Mammary epithelial cell (primary cell): ENCODE measurements at regions of chr5 and their contacts with region 1.

Region 1: GRCh38 chr5:111158105-111158744 is 66.0 kb upstream of the CAMK4 start:
- DNase-seq: peak; percentile 65
- H3K4me3 ChIP-seq: no peak overlapping the region
- H3K27ac ChIP-seq: no peak overlapping the region
- H3K4me1 ChIP-seq: no peaks in the 10 kb centered on the region
- H3K27me3 ChIP-seq: no peaks in the 10 kb centered on the region
- CTCF ChIP-seq: peak; percentile 100

Region 2: GRCh38 chr5:110738812-110739651 is 419.2 kb before region 1 on chr5 and contains the start of gene SLC25A46:
- CTCF ChIA-PET with region 1: no interaction called
- dilution Hi-C with region 1: no loop called
- in situ Hi-C with region 1: no loop called
- intact Hi-C with region 1: no loop called
- DNase-seq: peak; percentile 86
- H3K4me3 ChIP-seq: peak within 1 kb of the TSS; percentile 90 to 100 (median 99)
- H3K27ac ChIP-seq: peak within 1 kb of the TSS; percentile 71
- H3K4me1 ChIP-seq: no peaks in the 10 kb centered on the region
- H3K27me3 ChIP-seq: no peaks in the 10 kb centered on the region
- CTCF ChIP-seq: no peak
- total RNA-seq, gene SLC25A46: 44.4 to 95.0 TPM

Region 3: GRCh38 chr5:111266491-111266890 is 108.3 kb after region 1 on chr5:
- CTCF ChIA-PET with region 1: interaction called, 3 read pairs
- dilution Hi-C with region 1: no loop called
- in situ Hi-C with region 1: loop called in 1 of 2 experiments (anchors 5 kb)
- intact Hi-C with region 1: no loop called
- DNase-seq: peak; percentile 95
- H3K4me3 ChIP-seq: no peak overlapping the region
- H3K27ac ChIP-seq: no peak overlapping the region
- H3K4me1 ChIP-seq: peaks cover 23% of the 10 kb centered on the region
- H3K27me3 ChIP-seq: no peaks in the 10 kb centered on the region
- CTCF ChIP-seq: no peak

Region 4: DNA sequence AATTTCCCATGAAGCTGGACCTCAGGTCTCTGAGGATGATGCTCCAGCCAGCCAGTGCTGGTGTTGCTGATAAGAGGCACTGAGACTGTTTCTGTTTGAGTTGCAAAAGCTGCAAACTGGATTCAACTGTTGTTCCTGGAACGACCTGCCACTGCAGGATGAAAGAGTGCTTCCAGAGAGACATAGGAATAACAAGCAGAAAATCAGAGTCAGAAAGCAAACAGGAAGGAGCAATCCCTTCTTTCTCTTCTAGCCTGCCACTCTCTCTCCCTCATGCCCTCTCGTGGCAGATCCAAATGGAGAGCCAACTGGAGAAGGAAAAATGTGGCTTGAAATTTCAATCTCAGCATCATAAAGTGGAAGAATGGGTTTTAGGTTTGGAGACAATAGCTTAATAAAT is 243.7 kb after region 1 on chr5:
- CTCF ChIA-PET with region 1: no interaction called
- dilution Hi-C with region 1: no loop called
- in situ Hi-C with region 1: no loop called
- intact Hi-C with region 1: loop called (anchors 2 kb)
- DNase-seq: no peak
- H3K4me3 ChIP-seq: no peak overlapping the region
- H3K27ac ChIP-seq: no peak overlapping the region
- H3K4me1 ChIP-seq: no peaks in the 10 kb centered on the region
- H3K27me3 ChIP-seq: no peaks in the 10 kb centered on the region
- CTCF ChIP-seq: peak in 1 of 2 donors; percentile 28

Region 5: DNA sequence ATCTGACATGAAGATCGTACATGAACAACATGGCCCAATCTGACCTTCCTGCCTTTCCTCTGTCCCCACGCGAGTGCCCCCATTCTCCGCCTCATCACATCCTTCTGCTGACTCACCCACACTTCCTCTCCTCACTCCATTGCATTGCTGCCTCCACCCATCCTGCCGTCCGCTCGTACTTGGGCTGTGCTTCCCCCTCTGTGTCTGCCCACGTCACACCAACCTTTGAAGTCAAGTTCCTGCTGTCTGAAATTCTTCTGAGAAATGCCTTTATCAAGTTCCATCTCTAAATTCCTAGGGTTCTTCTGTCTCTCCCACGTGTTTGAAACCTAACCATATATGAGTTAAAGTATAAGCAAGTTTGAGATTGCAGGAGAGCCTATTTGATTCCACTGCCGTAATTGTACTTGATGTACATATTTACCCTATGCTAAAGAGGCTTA is 372.1 kb after region 1 on chr5:
- CTCF ChIA-PET with region 1: no interaction called
- dilution Hi-C with region 1: no loop called
- in situ Hi-C with region 1: no loop called
- intact Hi-C with region 1: loop called (anchors 5 kb)
- DNase-seq: peak; percentile 40
- H3K4me3 ChIP-seq: no peak overlapping the region
- H3K27ac ChIP-seq: no peak overlapping the region
- H3K4me1 ChIP-seq: peaks cover 8% of the 10 kb centered on the region
- H3K27me3 ChIP-seq: no peaks in the 10 kb centered on the region
- CTCF ChIP-seq: no peak

Region 6: DNA sequence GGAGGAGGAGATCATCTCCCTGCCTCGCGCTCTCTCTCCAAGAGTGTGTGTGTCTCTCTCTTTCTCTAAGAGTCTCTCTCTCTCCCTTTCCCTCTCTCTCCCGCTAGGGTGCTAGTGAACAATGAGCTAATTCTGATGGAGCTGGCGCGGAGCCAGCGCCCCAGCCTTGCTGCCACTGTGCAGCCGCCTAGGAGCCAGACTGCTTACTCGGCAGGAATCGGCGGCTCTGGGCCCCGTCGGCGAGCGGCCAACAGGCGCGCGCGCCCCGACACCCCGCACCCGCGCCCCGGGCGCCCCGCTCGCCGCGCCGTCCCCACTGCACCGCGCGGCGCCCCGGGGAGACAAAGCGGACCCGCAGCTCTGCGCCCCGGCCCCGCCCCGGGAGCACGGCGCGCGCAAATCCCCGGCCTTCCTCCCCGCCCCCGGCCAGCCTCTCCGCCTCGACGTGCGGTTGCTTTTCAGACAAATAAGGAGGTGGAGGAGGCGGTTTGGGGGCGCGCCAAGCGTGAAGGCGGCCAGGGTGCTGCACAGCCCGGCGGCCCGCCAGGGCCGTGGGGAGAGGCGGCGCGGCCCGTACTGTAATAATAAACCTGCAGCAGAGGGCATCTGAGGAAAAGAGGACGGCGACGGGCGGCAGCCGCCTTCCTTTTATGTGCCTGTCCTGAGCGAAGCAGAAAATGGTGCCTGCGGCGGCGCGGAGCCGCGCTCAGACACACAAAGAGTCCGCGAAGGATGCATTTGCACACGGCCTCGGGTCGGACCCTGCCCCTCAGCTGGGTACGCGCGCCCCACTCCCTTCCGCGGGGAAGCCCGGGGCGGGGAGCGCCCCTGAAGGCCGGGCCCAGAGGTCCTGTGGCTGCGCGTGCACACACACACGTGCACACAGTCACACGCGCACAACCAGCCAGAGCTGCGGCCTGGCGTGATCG is 599.4 kb after region 1 on chr5:
- CTCF ChIA-PET with region 1: no interaction called
- dilution Hi-C with region 1: no loop called
- in situ Hi-C with region 1: no loop called
- intact Hi-C with region 1: loop called (anchors 5 kb)
- DNase-seq: peak; percentile 93
- H3K4me3 ChIP-seq: peak overlapping the region; percentile 35 to 58 (median 39)
- H3K27ac ChIP-seq: peak overlapping the region; percentile 28
- H3K4me1 ChIP-seq: peaks cover 5% of the 10 kb centered on the region
- H3K27me3 ChIP-seq: no peaks in the 10 kb centered on the region
- CTCF ChIP-seq: peak; percentile 48 to 70